T-cell (primary cell): ENCODE measurements at regions of chr14 and their contacts with region 1.

Region 1: GRCh38 chr14:20970983-20971704 is 15.9 kb downstream of the RNASE2 start:
- DNase-seq: peak; percentile 39 to 85 (median 66)
- ATAC-seq: peak; percentile 88 to 95 (median 92)
- H3K4me3 ChIP-seq: peak overlapping the region; percentile 68 to 81
- H3K4me3 Mint-ChIP-seq: peak overlapping the region; percentile 84 to 90 (median 87)
- H3K27ac ChIP-seq: no peak overlapping the region
- H3K27ac Mint-ChIP-seq: peak overlapping the region; percentile 22 to 34
- H3K4me1 ChIP-seq: peaks cover 0 to 12% of the 10 kb centered on the region in 2 experiments
- H3K4me1 Mint-ChIP-seq: peaks cover 11 to 13% (median 12%) of the 10 kb centered on the region in 3 donors
- H3K27me3 ChIP-seq: peaks cover 2 to 17% of the 10 kb centered on the region in 2 experiments
- H3K27me3 Mint-ChIP-seq: peaks cover 27 to 47% of the 10 kb centered on the region in 2 donors

Region 2: GRCh38 chr14:20697273-20698017 is 273.7 kb before region 1 on chr14:
- CTCF ChIA-PET with region 1: interaction called, 5 to 11 read pairs
- POLR2A ChIA-PET with region 1: no interaction called
- DNase-seq: peak in 34 of 35 experiments; percentile 13 to 79 (median 51)
- ATAC-seq: peak; percentile 57 to 76 (median 73)
- H3K4me3 ChIP-seq: no peak overlapping the region
- H3K4me3 Mint-ChIP-seq: no peak overlapping the region
- H3K27ac ChIP-seq: no peak overlapping the region
- H3K27ac Mint-ChIP-seq: no peak overlapping the region
- H3K4me1 ChIP-seq: no peaks in the 10 kb centered on the region
- H3K4me1 Mint-ChIP-seq: peaks cover 0 to 2% (median 0%) of the 10 kb centered on the region in 3 donors
- H3K27me3 ChIP-seq: peaks cover 0 to 7% of the 10 kb centered on the region in 2 experiments
- H3K27me3 Mint-ChIP-seq: peaks cover 0 to 2% of the 10 kb centered on the region in 2 donors

Region 3: DNA sequence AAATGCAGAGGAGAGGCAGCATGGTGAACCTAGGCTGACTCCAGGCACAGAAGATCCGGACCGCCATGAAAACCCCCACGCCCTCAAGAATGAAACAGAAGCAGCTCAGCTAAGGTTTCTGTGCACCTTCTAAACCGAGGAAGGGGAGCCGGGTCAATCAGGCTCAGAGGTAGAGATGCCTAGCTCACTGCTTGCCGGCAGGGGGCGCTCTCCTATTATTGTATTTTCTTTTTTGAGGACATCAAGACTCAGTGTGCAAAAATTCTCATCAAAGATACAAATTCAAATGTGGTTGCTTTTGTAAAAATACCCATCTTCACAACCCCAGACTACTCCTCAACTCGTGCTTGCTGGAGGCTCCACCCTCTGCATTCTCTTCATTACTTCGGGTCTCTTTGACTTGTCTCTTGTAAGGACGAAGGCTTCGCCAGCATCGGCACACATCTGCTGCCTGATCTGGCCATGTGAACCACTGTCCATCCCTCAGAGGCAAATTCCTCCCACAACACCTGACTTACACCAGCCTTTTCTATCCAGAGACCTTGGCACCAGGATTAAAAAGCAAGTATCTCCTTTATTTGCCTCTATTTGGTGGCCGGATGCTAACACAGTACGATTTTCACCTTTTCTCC is 113.4 kb before region 1 on chr14:
- CTCF ChIA-PET with region 1: interaction called, 4 to 19 read pairs
- POLR2A ChIA-PET with region 1: no interaction called
- DNase-seq: peak; percentile 25 to 79 (median 63)
- ATAC-seq: peak; percentile 63 to 78 (median 69)
- H3K4me3 ChIP-seq: no peak overlapping the region
- H3K4me3 Mint-ChIP-seq: no peak overlapping the region
- H3K27ac ChIP-seq: no peak overlapping the region
- H3K27ac Mint-ChIP-seq: no peak overlapping the region
- H3K4me1 ChIP-seq: peaks cover 0 to 3% of the 10 kb centered on the region in 2 experiments
- H3K4me1 Mint-ChIP-seq: peaks cover 0 to 3% (median 3%) of the 10 kb centered on the region in 3 donors
- H3K27me3 ChIP-seq: peaks cover 0 to 10% of the 10 kb centered on the region in 2 experiments
- H3K27me3 Mint-ChIP-seq: peaks cover 41 to 42% of the 10 kb centered on the region in 2 donors

Region 4: DNA sequence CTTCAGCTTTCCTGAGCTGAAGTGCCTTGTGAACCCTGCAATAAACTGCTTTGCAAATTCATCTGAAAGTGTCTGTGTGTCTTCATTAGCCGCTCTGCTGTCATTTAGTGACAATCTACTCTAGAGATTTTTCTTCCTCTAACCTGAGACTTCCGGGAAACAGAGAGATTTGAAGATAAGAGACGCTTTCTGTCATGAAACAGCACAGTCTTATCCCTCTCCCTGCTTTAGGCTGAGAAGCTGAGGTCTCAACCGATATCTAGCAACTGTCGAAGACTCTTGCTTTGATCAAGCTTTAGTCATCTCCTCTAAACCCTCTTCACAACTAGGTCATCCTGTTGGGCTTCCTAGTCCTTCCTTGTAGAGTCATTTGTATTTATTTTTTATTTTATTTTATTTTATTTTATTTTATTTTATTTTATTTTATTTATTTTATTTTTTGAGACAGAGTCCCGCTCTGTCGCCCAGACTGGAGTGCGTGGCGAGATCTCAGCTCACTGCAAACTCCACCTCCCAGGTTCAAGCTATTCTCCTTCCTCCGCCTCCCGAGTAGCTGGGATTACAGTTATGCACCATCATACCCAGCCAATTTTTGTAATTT is 14.7 kb before region 1 on chr14:
- CTCF ChIA-PET with region 1: interaction called, 7 to 17 read pairs
- POLR2A ChIA-PET with region 1: no interaction called
- DNase-seq: peak in 1 of 35 experiments; percentile 14
- ATAC-seq: peak; percentile 19 to 63 (median 49)
- H3K4me3 ChIP-seq: no peak overlapping the region
- H3K4me3 Mint-ChIP-seq: peak overlapping the region in 1 of 3 donors; percentile 21
- H3K27ac ChIP-seq: no peak overlapping the region
- H3K27ac Mint-ChIP-seq: peak overlapping the region in 1 of 2 donors; percentile 56
- H3K4me1 ChIP-seq: peaks cover 3 to 8% of the 10 kb centered on the region in 2 experiments
- H3K4me1 Mint-ChIP-seq: peaks cover 18 to 23% (median 20%) of the 10 kb centered on the region in 3 donors
- H3K27me3 ChIP-seq: peaks cover 0 to 16% of the 10 kb centered on the region in 2 experiments
- H3K27me3 Mint-ChIP-seq: peaks cover 13 to 19% of the 10 kb centered on the region in 2 donors

Region 5: DNA sequence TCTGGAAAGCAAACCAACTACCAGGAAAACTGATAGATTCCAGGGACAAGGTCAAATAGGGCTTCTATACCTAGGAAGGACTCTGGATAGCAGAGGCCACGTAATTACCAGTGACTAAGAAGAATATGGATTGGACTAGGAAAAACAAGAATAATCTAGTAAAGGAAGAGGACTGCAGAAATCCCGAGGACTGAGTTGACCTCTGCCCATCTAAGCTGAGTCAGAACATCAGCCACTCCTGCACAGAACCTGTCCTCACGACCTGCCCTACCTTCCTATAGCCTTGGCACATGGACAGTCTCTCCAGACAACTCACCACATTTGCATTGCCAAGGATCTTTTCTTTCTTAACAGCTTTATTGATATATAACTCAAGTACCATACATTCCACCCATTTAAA is 1670.7 kb after region 1 on chr14:
- CTCF ChIA-PET with region 1: no interaction called
- POLR2A ChIA-PET with region 1: no interaction called
- DNase-seq: no peak
- ATAC-seq: no peak
- H3K4me3 ChIP-seq: no peak overlapping the region
- H3K4me3 Mint-ChIP-seq: no peak overlapping the region
- H3K27ac ChIP-seq: no peak overlapping the region
- H3K27ac Mint-ChIP-seq: no peak overlapping the region
- H3K4me1 ChIP-seq: no peaks in the 10 kb centered on the region
- H3K4me1 Mint-ChIP-seq: peaks cover 0 to 5% (median 3%) of the 10 kb centered on the region in 3 donors
- H3K27me3 ChIP-seq: peaks cover 0 to 3% of the 10 kb centered on the region in 2 experiments
- H3K27me3 Mint-ChIP-seq: no peaks in the 10 kb centered on the region